CD8-positive, alpha-beta memory T cell (primary cell): ENCODE measurements at regions of chr3 and their contacts with region 1.

Region 1: DNA sequence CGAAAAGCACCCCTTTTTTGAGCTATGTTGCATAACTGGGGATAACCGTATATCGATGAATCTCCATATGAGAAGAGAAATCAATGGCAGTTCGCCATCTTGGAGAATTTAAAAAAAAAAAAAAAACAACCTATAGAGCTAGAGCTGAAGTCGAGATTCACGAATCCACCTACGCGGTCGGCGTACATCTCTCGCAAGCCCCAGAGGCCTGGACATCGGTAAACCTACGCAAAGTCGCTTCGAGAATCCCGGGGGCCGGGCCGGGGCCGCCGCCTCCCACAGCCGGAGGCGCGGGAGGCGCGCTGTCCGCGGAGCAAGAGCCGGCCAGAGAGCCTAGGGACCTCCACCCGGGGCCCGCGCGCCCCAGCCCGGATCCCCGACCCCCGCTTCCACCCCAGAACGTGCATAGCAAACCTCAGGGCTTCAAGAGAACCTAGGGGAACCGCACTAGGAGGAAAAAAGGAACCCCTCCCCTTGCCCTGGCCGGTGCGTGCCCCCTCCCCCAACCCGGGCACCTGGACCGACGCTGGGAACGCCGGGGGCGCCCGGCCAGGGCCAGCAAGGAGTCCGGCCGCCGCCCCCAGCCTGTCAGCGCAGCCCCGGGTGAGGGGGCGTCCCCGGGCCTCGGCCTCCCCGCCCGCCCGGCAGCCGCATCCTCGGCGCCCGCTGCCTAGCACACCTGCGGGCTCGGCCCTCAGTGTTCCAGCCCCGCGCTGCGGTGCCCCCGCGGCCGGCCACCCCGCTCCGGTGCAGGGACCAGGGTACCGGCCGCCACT is 567 bp downstream of the PFN2 start:
- DNase-seq: peak; percentile 43 to 86 (median 71)
- H3K4me3 ChIP-seq: peak overlapping the region; percentile 58
- H3K4me3 Mint-ChIP-seq: peak overlapping the region; percentile 87 to 96 (median 92)
- H3K27ac ChIP-seq: no peak overlapping the region
- H3K27ac Mint-ChIP-seq: peak overlapping the region in 7 of 8 donors; percentile 33 to 80 (median 74)
- H3K4me1 ChIP-seq: peaks cover 10% of the 10 kb centered on the region
- H3K4me1 Mint-ChIP-seq: peaks cover 14 to 27% (median 23%) of the 10 kb centered on the region in 3 donors
- H3K27me3 ChIP-seq: peaks cover 3% of the 10 kb centered on the region
- H3K27me3 Mint-ChIP-seq: peaks cover 15 to 24% of the 10 kb centered on the region in 2 donors

Region 2: GRCh38 chr3:149832086-149832485 is 138.0 kb before region 1 on chr3:
- CTCF ChIA-PET with region 1: no interaction called
- POLR2A ChIA-PET with region 1: no interaction called
- DNase-seq: no peak
- H3K4me3 ChIP-seq: no peak overlapping the region
- H3K4me3 Mint-ChIP-seq: no peak overlapping the region
- H3K27ac ChIP-seq: no peak overlapping the region
- H3K27ac Mint-ChIP-seq: no peak overlapping the region
- H3K4me1 ChIP-seq: no peaks in the 10 kb centered on the region
- H3K4me1 Mint-ChIP-seq: peaks cover 6 to 39% (median 36%) of the 10 kb centered on the region in 3 donors
- H3K27me3 ChIP-seq: no peaks in the 10 kb centered on the region
- H3K27me3 Mint-ChIP-seq: no peaks in the 10 kb centered on the region

Region 3: GRCh38 chr3:150183678-150184425 is 213.7 kb after region 1 on chr3:
- CTCF ChIA-PET with region 1: interaction called, 14 read pairs
- POLR2A ChIA-PET with region 1: no interaction called
- DNase-seq: peak; percentile 5 to 57 (median 35)
- H3K4me3 ChIP-seq: no peak overlapping the region
- H3K4me3 Mint-ChIP-seq: no peak overlapping the region
- H3K27ac ChIP-seq: no peak overlapping the region
- H3K27ac Mint-ChIP-seq: no peak overlapping the region
- H3K4me1 ChIP-seq: no peaks in the 10 kb centered on the region
- H3K4me1 Mint-ChIP-seq: no peaks in the 10 kb centered on the region
- H3K27me3 ChIP-seq: no peaks in the 10 kb centered on the region
- H3K27me3 Mint-ChIP-seq: peaks cover 6 to 30% of the 10 kb centered on the region in 2 donors

Region 4: DNA sequence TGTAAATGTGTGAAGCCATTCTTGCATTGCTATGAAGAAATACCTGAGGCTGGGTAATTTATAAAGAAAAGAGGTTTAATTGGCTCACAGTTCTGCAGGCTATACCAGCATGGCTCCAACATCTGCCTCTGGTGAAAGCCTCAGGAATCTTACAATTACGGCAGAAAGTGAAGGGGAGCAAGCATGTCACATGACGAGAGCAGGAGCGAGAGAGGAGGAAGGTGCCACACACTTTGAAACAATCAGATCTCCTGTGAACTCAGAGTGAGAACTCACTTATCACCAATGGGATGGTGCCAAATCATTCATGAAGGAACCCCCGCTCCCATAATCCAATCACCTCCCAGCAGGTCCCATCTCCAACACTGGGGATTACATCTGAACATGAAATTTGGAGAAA is 224.4 kb after region 1 on chr3:
- CTCF ChIA-PET with region 1: no interaction called
- POLR2A ChIA-PET with region 1: interaction called, 12 read pairs
- DNase-seq: no peak
- H3K4me3 ChIP-seq: no peak overlapping the region
- H3K4me3 Mint-ChIP-seq: no peak overlapping the region
- H3K27ac ChIP-seq: no peak overlapping the region
- H3K27ac Mint-ChIP-seq: no peak overlapping the region
- H3K4me1 ChIP-seq: no peaks in the 10 kb centered on the region
- H3K4me1 Mint-ChIP-seq: no peaks in the 10 kb centered on the region
- H3K27me3 ChIP-seq: no peaks in the 10 kb centered on the region
- H3K27me3 Mint-ChIP-seq: peaks cover 17 to 49% of the 10 kb centered on the region in 2 donors

Region 5: GRCh38 chr3:150220799-150221198 is 250.7 kb after region 1 on chr3:
- CTCF ChIA-PET with region 1: interaction called, 17 read pairs
- POLR2A ChIA-PET with region 1: no interaction called
- DNase-seq: no peak
- H3K4me3 ChIP-seq: no peak overlapping the region
- H3K4me3 Mint-ChIP-seq: no peak overlapping the region
- H3K27ac ChIP-seq: no peak overlapping the region
- H3K27ac Mint-ChIP-seq: no peak overlapping the region
- H3K4me1 ChIP-seq: peaks cover 3% of the 10 kb centered on the region
- H3K4me1 Mint-ChIP-seq: peaks cover 4 to 9% (median 7%) of the 10 kb centered on the region in 3 donors
- H3K27me3 ChIP-seq: peaks cover 10% of the 10 kb centered on the region
- H3K27me3 Mint-ChIP-seq: peaks cover 33 to 64% of the 10 kb centered on the region in 2 donors